Activated naive CD4-positive, alpha-beta T cell treated with anti-CD3 and anti-CD28 coated beads for 36 hours (primary cell): ENCODE measurements at regions of chr7 and their contacts with region 1.

Region 1: GRCh38 chr7:106865130-106866041 is at the start of gene PIK3CG:
- DNase-seq: no peak
- H3K4me3 Mint-ChIP-seq: peak within 1 kb of the TSS; percentile 79
- H3K27ac Mint-ChIP-seq: peak within 1 kb of the TSS; percentile 65
- H3K4me1 Mint-ChIP-seq: peaks cover 77% of the 10 kb centered on the region
- H3K27me3 Mint-ChIP-seq: no peaks in the 10 kb centered on the region
- total RNA-seq, gene PIK3CG: 3.6 to 3.8 TPM

Region 2: DNA sequence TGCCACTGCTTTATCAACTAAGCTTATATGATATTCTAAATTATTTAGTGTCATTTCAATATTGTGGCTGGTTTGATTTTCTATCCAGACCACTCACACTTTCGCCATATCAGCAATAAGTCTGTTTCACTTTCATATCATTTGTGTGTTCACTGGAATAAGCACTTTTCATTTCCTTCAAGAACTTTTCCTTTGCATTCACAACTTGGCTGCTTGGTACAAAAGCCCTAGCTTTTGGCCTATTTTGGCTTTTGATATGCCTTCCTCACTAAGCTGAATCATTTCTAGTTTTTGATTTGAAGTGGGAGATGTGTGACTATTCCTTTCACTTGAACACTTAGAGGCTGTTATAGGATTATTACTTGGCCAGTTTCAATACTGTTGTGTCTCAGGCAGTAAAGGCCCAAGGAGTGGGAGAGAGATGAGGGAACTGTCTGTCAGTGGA is 459.7 kb before region 1 on chr7:
- CTCF ChIA-PET with region 1: no interaction called
- intact Hi-C with region 1: loop called (anchors 1 kb)
- DNase-seq: peak; percentile 53
- H3K4me3 Mint-ChIP-seq: no peak overlapping the region
- H3K27ac Mint-ChIP-seq: peak overlapping the region; percentile 50
- H3K4me1 Mint-ChIP-seq: peaks cover 32% of the 10 kb centered on the region
- H3K27me3 Mint-ChIP-seq: peaks cover 44% of the 10 kb centered on the region

Region 3: GRCh38 chr7:106485031-106485551 is 380.3 kb before region 1 on chr7:
- CTCF ChIA-PET with region 1: no interaction called
- intact Hi-C with region 1: loop called (anchors 2 kb)
- DNase-seq: peak; percentile 26
- H3K4me3 Mint-ChIP-seq: no peak overlapping the region
- H3K27ac Mint-ChIP-seq: peak overlapping the region; percentile 81
- H3K4me1 Mint-ChIP-seq: peaks cover 57% of the 10 kb centered on the region
- H3K27me3 Mint-ChIP-seq: peaks cover 23% of the 10 kb centered on the region

Region 4: DNA sequence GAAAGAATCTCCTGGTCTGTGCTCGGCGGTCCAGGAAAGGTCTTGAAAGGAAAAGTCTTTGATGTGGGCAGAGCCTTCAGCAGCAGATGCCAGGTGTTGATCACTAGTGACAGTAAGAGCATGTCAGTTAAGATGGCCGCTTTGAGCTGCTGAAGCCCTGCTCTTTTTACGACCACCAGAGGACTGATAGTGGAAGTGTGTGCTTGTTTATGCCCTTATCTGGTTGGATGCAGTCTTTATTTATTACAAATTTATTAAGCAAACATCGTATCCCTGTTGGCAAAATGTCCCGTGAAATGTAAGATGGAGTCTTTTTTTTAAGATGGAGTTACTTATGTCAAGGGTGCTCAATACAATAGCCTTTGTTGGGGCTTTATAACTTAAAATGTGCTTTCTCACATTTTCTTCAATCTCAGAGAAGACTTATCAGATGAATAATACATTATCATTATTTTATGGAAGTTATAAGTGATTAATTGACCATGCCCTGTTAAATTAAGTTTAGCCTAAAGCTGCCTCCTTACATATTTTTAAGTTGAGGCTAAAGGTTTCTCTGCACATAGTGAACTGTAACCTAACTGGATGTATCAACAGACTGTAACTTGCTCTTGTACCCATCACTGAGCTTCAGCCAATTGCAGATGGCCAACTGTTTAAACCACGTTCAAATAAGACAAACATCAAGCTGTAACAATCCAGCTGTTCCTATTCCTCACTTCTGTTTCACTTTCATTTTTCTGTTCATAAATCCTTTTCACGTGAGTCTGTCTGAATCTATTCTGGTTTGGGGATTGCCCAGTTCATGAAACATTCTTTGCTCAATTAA is 97.7 kb before region 1 on chr7:
- CTCF ChIA-PET with region 1: no interaction called
- intact Hi-C with region 1: loop called (anchors 1 kb)
- DNase-seq: peak; percentile 25
- H3K4me3 Mint-ChIP-seq: peak overlapping the region; percentile 20
- H3K27ac Mint-ChIP-seq: peak overlapping the region; percentile 13
- H3K4me1 Mint-ChIP-seq: peaks cover 43% of the 10 kb centered on the region
- H3K27me3 Mint-ChIP-seq: no peaks in the 10 kb centered on the region

Region 5: GRCh38 chr7:106959753-106960152 is 94.4 kb after region 1 on chr7:
- CTCF ChIA-PET with region 1: no interaction called
- intact Hi-C with region 1: no loop called
- DNase-seq: peak; percentile 6
- H3K4me3 Mint-ChIP-seq: no peak overlapping the region
- H3K27ac Mint-ChIP-seq: no peak overlapping the region
- H3K4me1 Mint-ChIP-seq: no peaks in the 10 kb centered on the region
- H3K27me3 Mint-ChIP-seq: no peaks in the 10 kb centered on the region

Region 6: GRCh38 chr7:107130487-107131225 is 265.3 kb after region 1 on chr7:
- CTCF ChIA-PET with region 1: no interaction called
- intact Hi-C with region 1: loop called (anchors 2 kb)
- DNase-seq: no peak
- H3K4me3 Mint-ChIP-seq: no peak overlapping the region
- H3K27ac Mint-ChIP-seq: no peak overlapping the region
- H3K4me1 Mint-ChIP-seq: peaks cover 10% of the 10 kb centered on the region
- H3K27me3 Mint-ChIP-seq: no peaks in the 10 kb centered on the region

Region 7: GRCh38 chr7:107816011-107816566 is 950.7 kb after region 1 on chr7:
- CTCF ChIA-PET with region 1: no interaction called
- intact Hi-C with region 1: loop called (anchors 1 kb)
- DNase-seq: no peak
- H3K4me3 Mint-ChIP-seq: no peak overlapping the region
- H3K27ac Mint-ChIP-seq: peak overlapping the region; percentile 1
- H3K4me1 Mint-ChIP-seq: peaks cover 32% of the 10 kb centered on the region
- H3K27me3 Mint-ChIP-seq: peaks cover 2% of the 10 kb centered on the region